ENCODE measurements at regions of chr9 and their contacts with region 1.

Region 1: DNA sequence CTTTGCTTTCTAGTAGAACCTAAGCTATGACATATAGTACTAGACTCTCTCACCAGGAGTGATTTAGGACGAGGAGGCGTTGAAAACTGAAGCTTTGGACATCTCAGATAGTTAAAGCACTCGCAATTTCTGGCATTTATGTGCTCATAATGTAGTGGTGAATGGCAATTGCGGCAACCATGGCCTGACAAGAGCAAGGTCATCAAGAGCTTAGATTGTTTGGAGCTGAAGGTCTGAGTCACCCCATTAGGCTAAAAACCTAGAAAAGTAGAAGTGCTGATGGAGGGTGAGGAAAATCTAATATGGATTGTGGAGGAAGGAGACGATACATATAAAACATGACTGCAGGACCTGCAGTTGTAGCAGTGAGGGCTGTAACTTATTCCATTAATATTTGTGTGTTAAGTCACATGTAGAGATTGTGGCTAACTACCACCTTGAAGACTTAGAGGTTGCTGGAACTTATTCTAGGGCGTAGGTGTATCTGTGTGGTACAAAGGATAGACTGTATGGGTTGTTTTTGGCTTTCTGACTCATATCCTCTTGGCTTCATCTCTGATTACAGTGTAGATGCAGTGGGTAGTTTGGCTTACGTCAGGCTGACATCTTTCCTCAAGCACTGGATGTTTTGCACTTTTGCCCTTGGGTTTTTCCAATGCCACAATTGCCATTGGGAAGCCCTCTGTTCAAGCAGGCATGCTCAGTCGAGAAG is 138.9 kb upstream of the CDKN2B start:
- DNase-seq: peak; percentile 28
- H3K4me3 Mint-ChIP-seq: no peak overlapping the region
- H3K27ac Mint-ChIP-seq: no peak overlapping the region
- H3K4me1 Mint-ChIP-seq: peaks cover 22% of the 10 kb centered on the region
- H3K27me3 Mint-ChIP-seq: peaks cover 11% of the 10 kb centered on the region

Region 2: DNA sequence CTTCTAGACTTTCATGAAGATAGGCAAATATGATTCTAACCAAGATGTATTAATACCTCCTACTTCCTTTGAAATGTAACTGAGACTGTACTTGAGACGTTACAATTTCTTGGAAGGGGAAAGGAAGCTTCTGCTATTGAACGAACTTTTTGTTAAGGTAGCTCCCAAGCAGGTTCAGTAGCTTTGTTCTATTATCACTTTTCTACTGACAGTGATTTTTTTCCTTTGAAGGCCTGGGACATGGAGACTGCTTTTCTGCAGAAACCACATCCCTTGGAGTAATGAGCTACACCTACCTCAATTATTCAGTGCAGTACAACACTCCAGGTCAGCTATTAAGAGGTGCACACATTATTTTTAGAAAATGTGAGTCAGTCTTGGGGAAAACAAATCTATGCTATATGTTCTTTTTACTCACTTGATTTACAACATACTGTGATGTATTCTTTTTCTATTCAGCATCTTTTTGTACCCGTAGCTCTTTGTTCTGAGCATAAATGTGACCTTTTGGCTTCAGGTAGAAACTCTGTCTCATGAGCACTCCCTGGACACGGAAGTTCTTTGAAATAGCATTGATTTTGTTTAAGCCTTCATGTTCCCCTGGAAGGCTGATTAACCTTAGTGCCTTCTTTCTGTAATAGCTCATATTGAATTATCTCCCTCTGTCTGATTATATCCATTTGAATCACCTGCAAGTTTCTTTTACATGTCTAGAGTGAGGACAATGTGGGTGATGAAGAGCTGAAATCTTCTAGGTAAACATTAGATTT is 82.4 kb before region 1 on chr9:
- CTCF ChIA-PET with region 1: no interaction called
- intact Hi-C with region 1: no loop called
- DNase-seq: no peak
- H3K4me3 Mint-ChIP-seq: no peak overlapping the region
- H3K27ac Mint-ChIP-seq: no peak overlapping the region
- H3K4me1 Mint-ChIP-seq: peaks cover 21% of the 10 kb centered on the region
- H3K27me3 Mint-ChIP-seq: peaks cover 16% of the 10 kb centered on the region

Region 3: DNA sequence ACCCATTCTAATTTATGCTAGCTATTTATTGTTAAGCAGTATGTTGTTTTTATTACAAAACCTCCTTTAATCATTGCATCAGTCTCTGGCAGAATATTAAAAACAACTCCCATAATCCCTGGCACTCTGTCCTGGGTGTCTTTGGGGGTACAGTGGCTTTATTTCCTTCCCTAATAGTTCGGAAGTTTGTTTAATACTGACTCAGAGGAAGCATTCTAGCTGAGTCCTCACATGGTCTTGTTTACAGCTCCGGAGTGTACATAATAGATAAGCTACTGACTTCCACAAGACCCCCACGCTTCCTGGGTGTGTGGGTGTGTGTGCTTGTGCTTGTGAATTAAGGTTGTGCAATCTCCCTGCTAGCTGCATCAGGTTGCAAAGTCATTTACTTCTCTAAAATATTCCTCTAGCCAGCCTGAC is 11.0 kb after region 1 on chr9:
- CTCF ChIA-PET with region 1: no interaction called
- intact Hi-C with region 1: no loop called
- DNase-seq: no peak
- H3K4me3 Mint-ChIP-seq: no peak overlapping the region
- H3K27ac Mint-ChIP-seq: no peak overlapping the region
- H3K4me1 Mint-ChIP-seq: no peaks in the 10 kb centered on the region
- H3K27me3 Mint-ChIP-seq: peaks cover 6% of the 10 kb centered on the region

Region 4: GRCh38 chr9:22208846-22209585 is 61.0 kb after region 1 on chr9:
- CTCF ChIA-PET with region 1: interaction called, 3 read pairs
- intact Hi-C with region 1: loop called (anchors 2 kb)
- DNase-seq: peak; percentile 14
- H3K4me3 Mint-ChIP-seq: no peak overlapping the region
- H3K27ac Mint-ChIP-seq: no peak overlapping the region
- H3K4me1 Mint-ChIP-seq: peaks cover 22% of the 10 kb centered on the region
- H3K27me3 Mint-ChIP-seq: no peaks in the 10 kb centered on the region

Region 5: DNA sequence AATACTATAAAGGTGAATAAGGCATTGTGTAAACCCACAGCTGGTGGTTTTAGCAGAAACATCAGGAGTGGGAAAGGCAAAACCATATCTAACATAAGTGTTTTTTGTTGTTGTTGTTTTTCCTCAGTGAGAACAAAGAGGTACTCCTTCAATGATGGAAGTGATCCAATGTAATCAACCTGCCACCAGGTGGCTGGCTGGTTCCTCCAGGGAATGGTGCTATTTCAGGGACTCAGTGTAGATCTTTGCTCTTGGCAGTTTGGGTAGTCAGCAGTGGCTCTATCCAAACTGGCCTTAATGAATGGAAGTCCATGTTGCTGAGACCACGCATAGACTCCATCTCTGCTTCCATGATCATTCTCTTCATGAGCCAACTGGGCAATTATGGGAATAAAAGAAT is 309.5 kb after region 1 on chr9:
- CTCF ChIA-PET with region 1: no interaction called
- intact Hi-C with region 1: no loop called
- DNase-seq: no peak
- H3K4me3 Mint-ChIP-seq: no peak overlapping the region
- H3K27ac Mint-ChIP-seq: no peak overlapping the region
- H3K4me1 Mint-ChIP-seq: no peaks in the 10 kb centered on the region
- H3K27me3 Mint-ChIP-seq: peaks cover 18% of the 10 kb centered on the region

Measured in activated naive CD4-positive, alpha-beta T cell treated with anti-CD3 and anti-CD28 coated beads for 36 hours (primary cell).